CD4-positive, alpha-beta T cell (primary cell): ENCODE measurements at regions of chr1 and their contacts with region 1.

Region 1: GRCh38 chr1:41416552-41417334 is 55.5 kb downstream of the FOXO6 start:
- DNase-seq: peak; percentile 36 to 80 (median 52)
- ATAC-seq: peak; percentile 46
- H3K4me3 ChIP-seq: no peak overlapping the region
- H3K4me3 Mint-ChIP-seq: no peak overlapping the region
- H3K27ac ChIP-seq: no peak overlapping the region
- H3K27ac Mint-ChIP-seq: no peak overlapping the region
- H3K4me1 ChIP-seq: peaks cover 3% of the 10 kb centered on the region
- H3K4me1 Mint-ChIP-seq: no peaks in the 10 kb centered on the region
- H3K27me3 ChIP-seq: peaks cover 0 to 4% of the 10 kb centered on the region in 2 experiments
- H3K27me3 Mint-ChIP-seq: peaks cover 5% of the 10 kb centered on the region
- CTCF ChIP-seq: peak; percentile 86

Region 2: GRCh38 chr1:41268154-41268770 is 148.5 kb before region 1 on chr1:
- CTCF ChIA-PET with region 1: interaction called, 7 read pairs
- POLR2A ChIA-PET with region 1: no interaction called
- intact Hi-C with region 1: loop called (anchors 1 kb)
- DNase-seq: peak; percentile 38 to 80 (median 57)
- ATAC-seq: peak; percentile 70
- H3K4me3 ChIP-seq: no peak overlapping the region
- H3K4me3 Mint-ChIP-seq: no peak overlapping the region
- H3K27ac ChIP-seq: no peak overlapping the region
- H3K27ac Mint-ChIP-seq: no peak overlapping the region
- H3K4me1 ChIP-seq: peaks cover 6% of the 10 kb centered on the region
- H3K4me1 Mint-ChIP-seq: no peaks in the 10 kb centered on the region
- H3K27me3 ChIP-seq: no peaks in the 10 kb centered on the region
- H3K27me3 Mint-ChIP-seq: no peaks in the 10 kb centered on the region
- CTCF ChIP-seq: peak; percentile 97

Region 3: GRCh38 chr1:41282679-41283317 is 133.9 kb before region 1 on chr1:
- CTCF ChIA-PET with region 1: no interaction called
- POLR2A ChIA-PET with region 1: no interaction called
- intact Hi-C with region 1: loop called (anchors 1 kb)
- DNase-seq: peak in 7 of 14 experiments; percentile 3 to 41 (median 21)
- ATAC-seq: no peak
- H3K4me3 ChIP-seq: no peak overlapping the region
- H3K4me3 Mint-ChIP-seq: no peak overlapping the region
- H3K27ac ChIP-seq: no peak overlapping the region
- H3K27ac Mint-ChIP-seq: no peak overlapping the region
- H3K4me1 ChIP-seq: no peaks in the 10 kb centered on the region
- H3K4me1 Mint-ChIP-seq: no peaks in the 10 kb centered on the region
- H3K27me3 ChIP-seq: peaks cover 7 to 24% of the 10 kb centered on the region in 2 experiments
- H3K27me3 Mint-ChIP-seq: peaks cover 69% of the 10 kb centered on the region
- CTCF ChIP-seq: peak; percentile 47

Region 4: GRCh38 chr1:41313661-41314131 is 103.0 kb before region 1 on chr1:
- CTCF ChIA-PET with region 1: no interaction called
- POLR2A ChIA-PET with region 1: no interaction called
- intact Hi-C with region 1: loop called in 1 of 2 experiments (anchors 5 kb)
- DNase-seq: peak in 3 of 14 experiments; percentile 14 to 39 (median 36)
- ATAC-seq: peak; percentile 32
- H3K4me3 ChIP-seq: no peak overlapping the region
- H3K4me3 Mint-ChIP-seq: no peak overlapping the region
- H3K27ac ChIP-seq: no peak overlapping the region
- H3K27ac Mint-ChIP-seq: no peak overlapping the region
- H3K4me1 ChIP-seq: no peaks in the 10 kb centered on the region
- H3K4me1 Mint-ChIP-seq: no peaks in the 10 kb centered on the region
- H3K27me3 ChIP-seq: no peaks in the 10 kb centered on the region
- H3K27me3 Mint-ChIP-seq: no peaks in the 10 kb centered on the region
- CTCF ChIP-seq: peak; percentile 56

Region 5: DNA sequence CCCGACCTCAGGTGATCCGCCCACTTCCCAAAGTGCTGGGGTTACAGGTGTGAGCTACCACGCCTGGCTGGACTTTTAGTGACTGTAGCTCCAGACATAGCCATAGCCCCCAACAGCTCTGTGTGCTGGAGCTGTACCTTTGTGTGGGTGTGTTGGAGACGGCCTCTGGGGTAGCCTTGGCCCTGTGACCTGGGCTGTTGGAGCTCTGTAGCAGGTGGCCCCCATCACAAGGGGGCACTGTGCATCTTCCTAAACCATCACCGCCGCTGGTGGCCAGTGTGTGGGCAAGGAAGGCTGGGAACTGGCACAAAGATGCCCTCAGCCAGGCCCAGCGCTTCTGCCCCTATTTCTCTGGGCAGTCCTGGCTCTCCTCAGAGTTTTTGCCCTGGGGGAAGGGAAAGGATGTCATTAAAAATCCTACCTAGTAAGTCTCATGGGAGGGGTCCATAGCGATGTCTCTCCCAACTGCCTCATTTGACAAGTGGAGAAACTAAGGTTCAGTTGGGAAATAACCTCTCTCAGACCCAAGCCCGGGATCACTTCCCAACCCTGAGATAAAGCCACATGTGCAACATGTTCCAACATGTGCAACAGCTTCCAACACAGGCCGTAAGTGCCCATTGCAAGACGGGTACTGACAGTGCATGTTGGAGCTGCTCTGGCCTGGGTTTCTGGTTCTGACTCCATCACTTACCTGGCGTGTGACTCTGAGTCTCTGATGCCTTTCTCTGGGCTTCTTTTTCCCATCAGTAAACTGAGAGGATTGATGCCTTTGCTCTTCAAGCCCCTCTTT is 93.7 kb before region 1 on chr1:
- CTCF ChIA-PET with region 1: no interaction called
- POLR2A ChIA-PET with region 1: no interaction called
- intact Hi-C with region 1: loop called in 1 of 2 experiments (anchors 1 kb)
- DNase-seq: peak in 8 of 14 experiments; percentile 5 to 47 (median 21)
- ATAC-seq: no peak
- H3K4me3 ChIP-seq: no peak overlapping the region
- H3K4me3 Mint-ChIP-seq: no peak overlapping the region
- H3K27ac ChIP-seq: no peak overlapping the region
- H3K27ac Mint-ChIP-seq: no peak overlapping the region
- H3K4me1 ChIP-seq: no peaks in the 10 kb centered on the region
- H3K4me1 Mint-ChIP-seq: no peaks in the 10 kb centered on the region
- H3K27me3 ChIP-seq: no peaks in the 10 kb centered on the region
- H3K27me3 Mint-ChIP-seq: no peaks in the 10 kb centered on the region
- CTCF ChIP-seq: peak; percentile 18